A673 (cell line): ENCODE measurements at regions of chr15 and their contacts with region 1.

Region 1: DNA sequence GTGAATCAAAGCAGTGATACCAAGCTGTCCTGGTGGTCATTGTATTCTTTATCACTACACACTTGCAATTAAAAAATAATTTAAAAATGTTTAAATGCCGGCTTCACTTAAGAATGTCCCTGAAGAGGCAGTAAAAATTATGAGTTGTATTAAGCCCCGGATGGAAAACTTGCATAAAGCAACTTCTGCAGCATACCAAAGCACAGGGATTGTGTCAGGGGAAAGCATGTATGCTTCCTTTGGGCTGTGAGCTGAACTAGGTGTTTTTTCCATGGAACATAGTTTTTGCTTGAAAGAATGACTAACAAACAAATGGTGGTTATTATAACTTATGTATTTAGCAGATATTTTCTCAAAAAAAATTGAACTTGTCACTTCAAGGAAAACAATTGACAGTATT is 143.1 kb downstream of the ARNT2 start:
- DNase-seq: no peak
- H3K4me3 ChIP-seq: no peak overlapping the region
- H3K27ac ChIP-seq: no peak overlapping the region
- H3K4me1 ChIP-seq: no peaks in the 10 kb centered on the region
- H3K27me3 ChIP-seq: peaks cover 3% of the 10 kb centered on the region
- CTCF ChIP-seq: no peak

Region 2: DNA sequence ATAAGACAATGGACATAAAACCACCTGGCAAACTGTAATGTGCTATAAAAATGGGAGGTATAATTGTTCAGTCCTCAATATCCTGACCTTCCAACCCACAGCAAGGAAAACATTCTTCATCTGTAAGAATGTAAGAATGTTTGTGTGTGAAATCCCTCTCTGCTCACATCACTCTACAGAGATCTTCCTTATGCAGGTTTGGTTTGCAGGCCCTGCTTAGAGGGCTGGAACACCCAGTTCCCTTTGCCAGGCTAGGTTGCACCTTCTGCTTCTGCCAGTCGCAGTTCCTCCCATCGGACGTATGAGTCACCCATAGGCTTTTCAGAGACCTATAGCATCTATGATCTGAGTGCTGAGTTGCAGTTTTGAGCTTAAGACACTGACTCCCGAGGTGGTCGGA is 1139.2 kb before region 1 on chr15:
- CTCF ChIA-PET with region 1: no interaction called
- POLR2A ChIA-PET with region 1: interaction called, 16 read pairs
- intact Hi-C with region 1: no loop called
- DNase-seq: no peak
- H3K4me3 ChIP-seq: no peak overlapping the region
- H3K27ac ChIP-seq: no peak overlapping the region
- H3K4me1 ChIP-seq: no peaks in the 10 kb centered on the region
- H3K27me3 ChIP-seq: no peaks in the 10 kb centered on the region
- CTCF ChIP-seq: no peak